Dendritic cell treated with granulocyte-macrophage colony-stimulating factor and Interleukin-4, amounts not matched to agents 40 ng/mL and 50 ng/mL, for 4 days (primary cell): ENCODE measurements at regions of chr20 and their contacts with region 1.

Region 1: DNA sequence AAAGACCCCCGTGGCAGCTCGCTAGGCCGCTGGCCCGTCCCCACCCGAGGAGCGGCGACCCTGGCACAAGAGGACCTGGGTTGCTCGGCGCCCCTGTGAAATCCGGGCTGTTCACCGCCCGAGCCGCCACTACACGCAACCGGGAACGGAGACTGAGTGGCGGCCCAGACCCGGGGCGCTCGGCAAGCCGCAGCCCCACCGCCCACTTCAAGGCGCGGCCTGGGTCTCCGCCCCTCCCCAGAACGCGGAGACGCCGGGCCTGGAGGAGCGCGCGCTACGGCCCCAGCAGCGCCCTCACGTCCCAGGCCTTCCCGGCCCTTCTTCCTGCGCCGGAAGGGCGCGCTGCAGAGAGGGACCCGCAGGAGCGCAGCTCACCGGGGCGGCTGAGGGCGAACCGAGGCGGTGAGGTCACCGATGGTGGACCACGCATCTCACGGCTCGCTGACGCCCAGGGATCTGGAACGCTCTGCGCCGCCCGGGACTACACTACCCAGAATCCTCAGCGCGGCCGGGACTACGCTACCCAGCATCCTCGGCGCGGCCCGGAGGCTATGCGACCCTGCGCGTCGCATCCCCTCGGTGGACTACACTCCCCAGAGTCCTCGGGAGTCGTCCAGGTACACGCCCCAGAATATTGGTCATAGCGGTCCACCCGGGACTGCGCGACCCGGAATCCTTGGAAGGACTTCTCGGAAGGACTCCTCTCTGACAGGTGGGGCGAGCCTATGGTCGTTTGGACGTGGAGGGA is at the start of gene ZNF337:
- H3K4me3 Mint-ChIP-seq: peak within 1 kb of the TSS; percentile 91
- H3K27ac Mint-ChIP-seq: peak within 1 kb of the TSS; percentile 91
- H3K4me1 Mint-ChIP-seq: peaks cover 27% of the 10 kb centered on the region
- H3K27me3 Mint-ChIP-seq: no peaks in the 10 kb centered on the region

Region 2: DNA sequence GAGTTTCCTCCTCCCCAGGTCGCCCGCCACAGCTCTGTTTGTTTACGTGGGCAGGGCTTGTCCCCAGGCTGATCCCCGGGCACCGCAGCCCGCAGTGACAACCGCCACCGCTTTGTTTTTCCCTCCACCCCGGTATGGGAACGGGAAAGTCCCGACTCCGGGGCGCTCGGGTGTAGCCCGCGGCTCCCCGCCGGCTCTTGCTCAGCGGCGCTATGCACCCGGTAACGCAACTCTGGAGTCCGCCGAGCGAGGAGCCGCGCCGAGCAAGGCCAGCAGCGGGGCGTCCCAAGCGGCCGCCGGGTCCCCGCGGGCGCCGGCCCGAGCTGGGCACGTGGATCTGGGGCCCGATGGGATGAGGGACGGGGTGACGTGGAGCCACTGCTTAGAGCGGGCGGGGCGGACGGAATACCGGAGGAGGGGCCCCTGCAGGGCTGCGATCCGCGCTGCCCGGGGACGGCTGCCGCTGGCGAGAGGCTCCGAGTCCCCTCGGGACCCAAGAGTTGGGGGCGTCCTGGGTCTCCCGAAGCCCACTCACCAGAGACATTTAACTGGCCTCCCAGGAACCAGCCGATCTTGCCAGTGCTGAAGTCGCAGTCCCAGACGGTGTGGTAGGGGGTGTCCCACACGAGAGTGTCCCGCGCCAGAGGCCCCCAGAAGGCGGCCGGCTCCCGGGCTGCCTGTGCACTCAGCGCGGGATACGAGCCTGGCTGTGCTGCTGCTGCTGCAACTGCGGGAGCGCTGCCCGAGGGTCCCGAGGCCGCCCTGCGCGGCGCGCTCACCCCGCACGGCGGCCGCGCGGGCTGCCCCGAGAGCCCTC is 639.1 kb before region 1 on chr20:
- intact Hi-C with region 1: loop called (anchors 10 kb)
- H3K4me3 Mint-ChIP-seq: peak overlapping the region; percentile 80
- H3K27ac Mint-ChIP-seq: peak overlapping the region; percentile 84
- H3K4me1 Mint-ChIP-seq: peaks cover 44% of the 10 kb centered on the region
- H3K27me3 Mint-ChIP-seq: peaks cover 15% of the 10 kb centered on the region

Region 3: DNA sequence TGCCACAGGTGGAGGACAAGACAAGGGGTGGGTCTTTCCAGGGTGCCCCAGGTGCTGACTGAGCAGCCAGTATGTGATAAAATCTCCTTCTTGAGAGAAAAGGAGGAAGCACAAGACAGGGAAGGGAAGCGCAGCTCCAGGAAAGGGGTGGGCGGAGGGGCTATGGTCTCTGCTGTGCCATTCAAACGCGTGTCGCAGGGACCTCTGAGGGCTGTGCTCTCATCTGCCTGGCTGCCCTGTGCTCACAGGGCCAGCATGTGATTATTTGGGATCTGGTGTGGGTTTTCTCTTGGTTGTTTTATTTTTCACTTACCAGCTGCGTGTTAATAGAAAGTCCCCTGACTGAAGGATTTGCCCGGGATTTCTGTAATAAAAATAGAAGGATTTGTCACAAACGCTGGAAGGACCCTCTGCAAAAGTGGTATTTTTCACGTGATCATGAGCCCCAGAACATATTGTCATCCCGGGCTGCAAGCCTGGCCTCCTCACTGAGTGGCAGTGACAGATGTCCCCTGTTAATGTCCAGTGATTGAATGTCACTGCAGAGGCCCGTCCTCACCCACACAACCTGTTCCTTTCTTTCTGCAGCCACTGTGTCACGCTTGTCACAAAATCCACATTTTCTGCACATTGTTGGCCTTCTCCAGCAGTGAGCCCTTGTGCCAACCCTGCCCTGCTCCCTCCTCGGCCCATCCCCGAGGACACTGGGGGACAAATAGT is 579.7 kb before region 1 on chr20:
- intact Hi-C with region 1: no loop called
- H3K4me3 Mint-ChIP-seq: no peak overlapping the region
- H3K27ac Mint-ChIP-seq: no peak overlapping the region
- H3K4me1 Mint-ChIP-seq: peaks cover 5% of the 10 kb centered on the region
- H3K27me3 Mint-ChIP-seq: peaks cover 6% of the 10 kb centered on the region

Region 4: GRCh38 chr20:25148181-25148981 is 548.2 kb before region 1 on chr20:
- intact Hi-C with region 1: no loop called
- H3K4me3 Mint-ChIP-seq: peak overlapping the region; percentile 69
- H3K27ac Mint-ChIP-seq: peak overlapping the region; percentile 5
- H3K4me1 Mint-ChIP-seq: peaks cover 8% of the 10 kb centered on the region
- H3K27me3 Mint-ChIP-seq: peaks cover 53% of the 10 kb centered on the region

Region 5: GRCh38 chr20:25247956-25248785 is 448.4 kb before region 1 on chr20 and contains the start of gene PYGB:
- intact Hi-C with region 1: loop called (anchors 5 kb)
- H3K4me3 Mint-ChIP-seq: peak within 1 kb of the TSS; percentile 91
- H3K27ac Mint-ChIP-seq: peak within 1 kb of the TSS; percentile 82
- H3K4me1 Mint-ChIP-seq: peaks cover 59% of the 10 kb centered on the region
- H3K27me3 Mint-ChIP-seq: peaks cover 6% of the 10 kb centered on the region

Region 6: GRCh38 chr20:25623736-25624499 is 72.6 kb before region 1 on chr20 and contains the start of gene NANP:
- intact Hi-C with region 1: loop called (anchors 1 kb)
- H3K4me3 Mint-ChIP-seq: peak within 1 kb of the TSS; percentile 83
- H3K27ac Mint-ChIP-seq: peak within 1 kb of the TSS; percentile 92
- H3K4me1 Mint-ChIP-seq: peaks cover 39% of the 10 kb centered on the region
- H3K27me3 Mint-ChIP-seq: no peaks in the 10 kb centered on the region

Region 7: GRCh38 chr20:25685276-25686080 is 11.1 kb before region 1 on chr20:
- intact Hi-C with region 1: no loop called
- H3K4me3 Mint-ChIP-seq: no peak overlapping the region
- H3K27ac Mint-ChIP-seq: no peak overlapping the region
- H3K4me1 Mint-ChIP-seq: no peaks in the 10 kb centered on the region
- H3K27me3 Mint-ChIP-seq: no peaks in the 10 kb centered on the region

Region 8: DNA sequence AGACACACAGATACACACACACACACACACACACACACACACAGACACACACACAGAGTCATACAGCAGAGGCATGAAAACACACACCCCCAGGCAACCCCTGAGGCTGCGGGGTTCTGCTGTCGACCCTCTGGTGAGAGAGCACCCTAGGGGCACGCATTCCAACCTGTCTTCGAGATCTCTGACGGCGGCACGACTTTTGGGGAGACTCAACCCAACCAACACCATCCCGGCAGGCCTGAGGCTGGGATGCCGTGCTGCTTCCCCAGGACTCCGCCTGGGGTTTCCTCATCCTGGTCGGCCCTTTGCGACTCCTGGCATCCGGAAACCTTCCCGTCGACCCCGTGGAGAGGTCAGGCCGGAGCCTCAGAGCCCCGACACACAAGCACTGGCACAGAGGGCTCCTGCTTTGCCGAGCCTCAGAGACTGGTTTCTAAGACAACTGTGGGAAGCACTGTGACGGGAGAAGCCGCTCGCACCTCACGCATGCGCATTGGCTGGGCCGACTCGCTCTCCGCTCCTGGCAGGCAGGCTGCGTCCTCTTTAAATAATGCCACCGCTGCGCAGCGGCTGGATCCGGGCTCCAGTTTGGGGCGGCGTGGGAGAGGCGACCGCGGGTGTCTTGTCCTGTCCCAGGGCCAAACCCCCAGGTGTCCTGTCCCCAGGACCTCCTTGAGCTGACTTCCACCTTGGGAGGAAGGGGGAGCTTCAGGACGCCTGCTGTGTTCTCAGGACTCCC is 169.0 kb after region 1 on chr20:
- intact Hi-C with region 1: loop called (anchors 5 kb)
- H3K4me3 Mint-ChIP-seq: no peak overlapping the region
- H3K27ac Mint-ChIP-seq: no peak overlapping the region
- H3K4me1 Mint-ChIP-seq: peaks cover 15% of the 10 kb centered on the region
- H3K27me3 Mint-ChIP-seq: peaks cover 93% of the 10 kb centered on the region